ENCODE measurements at regions of chr11 and their contacts with region 1.

Region 1: DNA sequence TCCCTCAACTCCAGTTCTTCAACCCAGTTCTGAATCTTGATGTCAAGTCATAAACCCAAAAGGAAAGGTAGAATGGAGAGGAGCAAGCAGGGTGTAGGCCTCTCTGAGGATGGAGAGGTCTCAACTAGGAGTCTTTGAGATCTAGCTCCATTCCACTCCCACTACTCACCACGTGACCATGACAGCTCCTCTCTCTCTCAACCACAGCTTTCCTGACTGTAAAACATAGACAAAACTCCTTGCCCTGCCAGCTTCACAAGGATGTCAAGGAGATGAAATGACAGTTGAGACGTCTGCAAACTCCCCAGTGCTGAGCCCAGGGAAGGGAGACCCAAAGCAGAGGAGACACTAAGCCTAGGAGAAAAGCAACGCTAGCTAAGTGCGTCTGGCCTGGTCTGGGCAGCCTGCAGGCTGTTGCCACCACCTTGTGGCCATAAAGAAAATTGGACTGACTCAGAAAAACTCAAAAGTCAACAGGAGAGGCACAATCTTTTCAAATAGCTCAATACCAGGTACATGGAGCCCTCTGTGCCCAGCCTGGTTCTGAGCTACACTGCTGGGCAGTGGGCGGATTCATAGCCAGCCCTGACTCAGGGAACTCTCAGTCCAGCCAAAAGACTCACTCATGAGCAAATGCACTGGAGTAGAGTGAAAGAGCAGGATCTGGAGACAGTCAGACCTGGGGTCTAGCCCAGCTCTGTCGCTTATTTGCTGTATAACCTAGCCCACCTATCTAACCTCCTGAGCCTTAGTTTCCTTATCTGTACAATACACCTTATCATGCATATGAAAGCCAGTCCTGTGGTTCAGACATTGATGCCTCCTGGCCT is 3.4 kb downstream of the CLPB start:
- DNase-seq: peak; percentile 66
- ATAC-seq: peak; percentile 71
- H3K4me3 ChIP-seq: no peak overlapping the region
- H3K27ac ChIP-seq: peak overlapping the region; percentile 73
- H3K4me1 ChIP-seq: peaks cover 57% of the 10 kb centered on the region
- H3K27me3 ChIP-seq: no peaks in the 10 kb centered on the region
- CTCF ChIP-seq: peak; percentile 96
- EP300 ChIP-seq: peak; percentile 16 to 20; a peak in 1 of 4 replicates
- POLR2A ChIP-seq: no peak
- RAD21 ChIP-seq: peak; percentile 94

Region 2: DNA sequence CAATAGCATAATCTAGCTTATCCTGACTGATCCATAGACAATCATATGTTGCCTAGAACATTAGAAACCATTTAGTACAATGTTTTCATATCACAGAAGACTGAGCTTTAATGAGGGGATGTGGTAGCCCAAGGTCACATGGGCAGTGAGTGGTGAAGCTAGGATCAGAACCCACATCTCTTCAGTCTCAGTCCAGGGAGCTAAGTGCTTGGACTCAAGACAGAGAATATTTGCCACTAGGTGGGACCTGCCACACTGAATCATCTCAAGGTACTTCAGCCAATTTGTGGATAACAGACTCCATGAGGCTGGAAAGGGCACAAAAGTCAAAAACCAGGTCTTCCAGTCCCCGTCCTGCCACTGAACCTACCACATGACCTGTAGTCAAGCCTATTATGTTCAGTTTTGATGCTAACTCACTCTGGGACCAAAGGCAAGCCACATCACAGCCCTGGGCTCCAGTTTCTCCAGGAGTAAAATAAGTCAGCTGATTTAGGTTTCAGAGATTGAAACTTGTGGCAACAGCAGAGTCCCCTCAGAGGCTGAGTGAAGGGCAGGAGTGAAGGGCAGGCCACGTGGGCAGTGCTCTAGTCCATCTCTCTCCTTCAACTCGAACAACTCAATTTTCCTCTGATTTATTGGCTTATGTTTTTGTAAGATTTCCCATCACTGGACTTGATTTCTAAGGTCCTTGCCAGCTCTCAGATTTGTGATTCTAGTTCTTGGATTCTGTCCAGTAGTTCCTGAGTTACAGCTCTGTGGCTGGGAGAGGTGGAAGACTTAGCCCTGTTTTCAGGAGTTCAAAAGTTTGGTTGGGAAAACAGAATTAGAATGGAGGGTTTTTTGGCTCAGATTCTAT is 102.4 kb before region 1 on chr11:
- CTCF ChIA-PET with region 1: interaction called, 3 read pairs
- POLR2A ChIA-PET with region 1: no interaction called
- in situ Hi-C with region 1: no loop called
- intact Hi-C with region 1: loop called (anchors 1 kb)
- DNase-seq: no peak
- ATAC-seq: no peak
- H3K4me3 ChIP-seq: no peak overlapping the region
- H3K27ac ChIP-seq: no peak overlapping the region
- H3K4me1 ChIP-seq: peaks cover 11% of the 10 kb centered on the region
- H3K27me3 ChIP-seq: no peaks in the 10 kb centered on the region
- CTCF ChIP-seq: peak; percentile 26; the same call in 1 of the 2 replicates
- EP300 ChIP-seq: no peak
- POLR2A ChIP-seq: no peak
- RAD21 ChIP-seq: no peak

Region 3: GRCh38 chr11:72352859-72353551 is 78.0 kb before region 1 on chr11:
- CTCF ChIA-PET with region 1: interaction called, 14 read pairs
- POLR2A ChIA-PET with region 1: interaction called, 4 read pairs
- in situ Hi-C with region 1: loop called (anchors 5 kb)
- intact Hi-C with region 1: loop called (anchors 1 kb)
- DNase-seq: no peak
- ATAC-seq: no peak
- H3K4me3 ChIP-seq: no peak overlapping the region
- H3K27ac ChIP-seq: no peak overlapping the region
- H3K4me1 ChIP-seq: peaks cover 11% of the 10 kb centered on the region
- H3K27me3 ChIP-seq: no peaks in the 10 kb centered on the region
- CTCF ChIP-seq: no peak
- EP300 ChIP-seq: no peak
- POLR2A ChIP-seq: no peak
- RAD21 ChIP-seq: no peak

Region 4: GRCh38 chr11:72396041-72396440 is 34.9 kb before region 1 on chr11:
- CTCF ChIA-PET with region 1: interaction called, 5 read pairs
- POLR2A ChIA-PET with region 1: interaction called, 9 read pairs
- in situ Hi-C with region 1: no loop called
- intact Hi-C with region 1: loop called (anchors 5 kb)
- DNase-seq: no peak
- ATAC-seq: no peak
- H3K4me3 ChIP-seq: no peak overlapping the region
- H3K27ac ChIP-seq: no peak overlapping the region
- H3K4me1 ChIP-seq: peaks cover 66% of the 10 kb centered on the region
- H3K27me3 ChIP-seq: no peaks in the 10 kb centered on the region
- CTCF ChIP-seq: no peak
- EP300 ChIP-seq: no peak
- POLR2A ChIP-seq: no peak
- RAD21 ChIP-seq: no peak

Region 5: DNA sequence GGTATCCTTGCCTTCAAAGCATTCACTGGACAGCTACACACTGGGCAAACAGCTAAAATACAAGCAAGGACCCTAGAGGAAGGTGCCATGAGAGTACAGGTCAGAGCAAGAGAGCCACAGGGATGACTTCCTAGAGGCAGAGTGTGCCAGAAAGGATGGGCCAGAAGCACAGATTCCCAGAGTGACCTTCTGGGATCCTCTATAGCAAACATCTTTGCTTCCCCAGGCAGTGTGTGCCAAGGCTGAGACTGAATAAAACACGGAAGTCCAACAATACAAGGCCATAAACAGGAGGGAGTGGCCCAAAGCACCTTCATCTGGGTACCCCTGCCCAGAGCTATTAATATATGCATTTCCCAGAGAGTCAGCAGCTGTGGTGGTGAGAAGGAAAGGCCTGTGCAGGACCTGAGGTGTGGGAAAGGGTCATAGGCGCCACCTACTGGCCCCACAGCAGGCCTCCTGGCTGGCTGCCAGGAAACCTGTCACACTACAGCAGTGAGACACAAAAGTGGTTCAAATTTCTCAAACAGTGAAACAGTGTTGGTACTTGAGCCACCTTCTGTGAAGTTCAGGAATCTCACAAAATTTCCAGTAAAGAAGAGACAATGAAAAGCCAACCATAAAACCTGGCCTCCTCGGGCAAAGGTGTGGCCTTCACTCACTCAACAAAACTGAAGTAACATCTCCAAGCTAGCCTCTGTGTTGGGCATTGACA is 16.9 kb before region 1 on chr11:
- CTCF ChIA-PET with region 1: interaction called, 23 read pairs
- POLR2A ChIA-PET with region 1: interaction called, 11 read pairs
- in situ Hi-C with region 1: no loop called
- intact Hi-C with region 1: loop called (anchors 1 kb)
- DNase-seq: peak; percentile 76
- ATAC-seq: peak; percentile 40
- H3K4me3 ChIP-seq: no peak overlapping the region
- H3K27ac ChIP-seq: peak overlapping the region; percentile 37
- H3K4me1 ChIP-seq: peaks cover 99% of the 10 kb centered on the region
- H3K27me3 ChIP-seq: no peaks in the 10 kb centered on the region
- CTCF ChIP-seq: peak; percentile 93
- EP300 ChIP-seq: peak in 1 of 2 experiments; percentile 40; a peak in 1 of 4 replicates
- POLR2A ChIP-seq: no peak
- RAD21 ChIP-seq: peak; percentile 91

Region 6: DNA sequence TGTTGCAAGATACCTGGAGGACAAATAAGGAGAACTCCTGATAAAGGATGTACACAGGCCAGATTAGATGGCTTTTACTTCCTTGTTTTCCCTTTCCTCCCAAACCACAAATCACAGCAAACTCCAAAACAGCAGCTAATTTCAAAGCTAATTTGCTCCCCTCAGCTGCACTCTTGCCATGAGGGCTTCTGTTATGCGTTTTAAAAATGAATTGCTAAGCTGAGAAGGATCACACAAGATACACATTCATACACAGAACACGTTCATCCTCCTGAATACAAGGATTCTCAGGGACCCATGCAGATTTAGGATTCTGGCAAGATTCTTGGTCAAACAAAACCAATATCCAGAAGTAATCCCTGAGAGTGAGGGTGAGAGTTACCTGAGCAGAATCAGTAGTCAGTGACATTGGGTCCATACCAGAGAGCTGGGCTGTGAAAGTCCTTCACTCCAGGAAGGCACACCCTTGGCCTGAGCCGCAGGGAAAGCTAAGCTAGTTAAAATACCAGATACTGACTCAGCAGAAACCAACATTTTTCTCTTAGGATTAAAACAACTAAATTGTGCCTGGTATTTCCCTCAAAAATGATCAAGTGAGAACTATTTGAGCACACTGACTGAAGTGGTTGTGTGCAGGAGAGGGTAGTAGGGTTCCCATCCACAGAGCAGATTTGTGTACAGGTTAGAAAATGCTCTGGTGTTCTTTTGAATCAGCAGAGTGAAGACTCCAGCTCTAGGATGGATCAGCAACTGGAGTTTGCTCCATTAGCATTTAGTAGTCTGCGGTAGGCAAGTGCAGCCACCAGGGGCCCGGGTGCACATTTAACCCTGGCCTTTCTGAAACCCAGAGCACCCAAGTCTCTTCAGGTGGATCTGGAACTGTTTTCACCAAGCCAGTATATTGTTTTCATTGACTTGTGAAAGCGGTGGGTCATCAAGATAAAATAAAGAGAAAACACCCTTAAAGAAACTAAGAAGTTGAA is 103.9 kb after region 1 on chr11:
- CTCF ChIA-PET with region 1: no interaction called
- POLR2A ChIA-PET with region 1: no interaction called
- in situ Hi-C with region 1: no loop called
- intact Hi-C with region 1: no loop called
- DNase-seq: no peak
- ATAC-seq: peak; percentile 66
- H3K4me3 ChIP-seq: no peak overlapping the region
- H3K27ac ChIP-seq: no peak overlapping the region
- H3K4me1 ChIP-seq: no peaks in the 10 kb centered on the region
- H3K27me3 ChIP-seq: peaks cover 0 to 22% of the 10 kb centered on the region in 2 experiments; a peak in 3 of 5 replicates
- CTCF ChIP-seq: no peak
- EP300 ChIP-seq: no peak
- POLR2A ChIP-seq: no peak
- RAD21 ChIP-seq: no peak